RWPE1 (cell line): ENCODE measurements at regions of chr6 and their contacts with region 1.

Region 1: DNA sequence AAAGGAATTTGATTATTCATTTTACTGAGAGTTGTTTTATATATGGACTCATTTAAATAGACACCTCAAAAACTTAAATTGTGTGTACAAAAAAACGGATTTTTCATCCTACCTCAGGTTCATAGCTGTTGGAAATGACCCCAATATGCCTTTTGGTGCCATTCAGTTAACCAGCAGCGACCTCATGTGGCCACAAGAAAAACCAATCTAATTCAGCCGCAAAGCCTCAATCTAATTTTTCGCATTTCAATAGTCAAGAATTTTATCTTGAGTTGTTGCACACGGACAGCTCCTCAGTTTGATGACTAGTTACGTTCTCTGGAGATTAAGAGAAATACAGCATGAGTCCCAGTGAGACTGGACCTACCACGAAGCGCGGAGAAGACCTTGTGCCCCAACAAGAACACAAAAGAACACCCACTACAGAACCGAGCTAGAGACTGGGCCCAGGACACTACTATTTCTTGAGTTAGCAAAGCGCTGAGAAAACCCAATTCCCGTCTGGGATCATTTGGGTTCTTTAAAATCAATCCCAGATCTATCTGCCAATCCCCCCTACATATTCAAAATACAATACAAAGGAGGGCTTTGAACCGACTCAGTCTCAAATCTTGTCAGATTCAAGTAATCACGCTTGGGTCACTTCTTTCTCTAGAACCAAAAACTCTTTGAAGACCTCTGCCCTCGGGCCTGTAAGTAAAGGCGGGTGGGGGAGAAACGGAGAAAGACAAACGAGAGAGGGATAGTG is 1.1 kb downstream of the TCP11 start:
- DNase-seq: peak; percentile 47
- H3K27ac ChIP-seq: no peak overlapping the region
- CTCF ChIP-seq: peak; percentile 82

Region 2: GRCh38 chr6:34986845-34987246 is 153.2 kb before region 1 on chr6:
- CTCF ChIA-PET with region 1: interaction called, 21 read pairs
- POLR2A ChIA-PET with region 1: no interaction called
- DNase-seq: peak; percentile 51
- H3K27ac ChIP-seq: no peak overlapping the region
- CTCF ChIP-seq: peak; percentile 72